B cell (primary cell): ENCODE measurements at regions of chr1 and their contacts with region 1.

Region 1: GRCh38 chr1:89524369-89525168 is at the start of gene LRRC8B:
- DNase-seq: peak; percentile 94
- ATAC-seq: peak; percentile 81
- H3K4me3 ChIP-seq: peak within 1 kb of the TSS; percentile 58 to 99 (median 88)
- H3K4me3 Mint-ChIP-seq: peak within 1 kb of the TSS; percentile 98
- H3K27ac ChIP-seq: peak within 1 kb of the TSS; percentile 97 to 98
- H3K27ac Mint-ChIP-seq: peak within 1 kb of the TSS; percentile 97
- H3K4me1 ChIP-seq: peaks cover 13 to 23% of the 10 kb centered on the region in 2 donors
- H3K4me1 Mint-ChIP-seq: peaks cover 26% of the 10 kb centered on the region
- H3K27me3 ChIP-seq: no peaks in the 10 kb centered on the region
- H3K27me3 Mint-ChIP-seq: no peaks in the 10 kb centered on the region
- CTCF ChIP-seq: peak; percentile 6
- total RNA-seq, gene LRRC8B: 9.9 and 11.7 TPM in 2 replicates

Region 2: GRCh38 chr1:89552471-89553081 is 28.0 kb after region 1 on chr1:
- CTCF ChIA-PET with region 1: interaction called, 3 read pairs
- POLR2A ChIA-PET with region 1: no interaction called
- intact Hi-C with region 1: loop called (anchors 1 kb)
- DNase-seq: peak; percentile 64
- ATAC-seq: peak; percentile 67
- H3K4me3 ChIP-seq: peak overlapping the region; percentile 8 to 66 (median 41)
- H3K4me3 Mint-ChIP-seq: peak overlapping the region; percentile 69
- H3K27ac ChIP-seq: peak overlapping the region; percentile 67 to 82
- H3K27ac Mint-ChIP-seq: peak overlapping the region; percentile 75
- H3K4me1 ChIP-seq: peaks cover 8 to 13% of the 10 kb centered on the region in 2 donors
- H3K4me1 Mint-ChIP-seq: peaks cover 37% of the 10 kb centered on the region
- H3K27me3 ChIP-seq: no peaks in the 10 kb centered on the region
- H3K27me3 Mint-ChIP-seq: no peaks in the 10 kb centered on the region
- CTCF ChIP-seq: no peak

Region 3: GRCh38 chr1:89605692-89606091 is 81.1 kb after region 1 on chr1:
- CTCF ChIA-PET with region 1: interaction called, 18 read pairs
- POLR2A ChIA-PET with region 1: no interaction called
- intact Hi-C with region 1: no loop called
- DNase-seq: no peak
- ATAC-seq: no peak
- H3K4me3 ChIP-seq: no peak overlapping the region
- H3K4me3 Mint-ChIP-seq: no peak overlapping the region
- H3K27ac ChIP-seq: no peak overlapping the region
- H3K27ac Mint-ChIP-seq: peak overlapping the region; percentile 6
- H3K4me1 ChIP-seq: peaks cover 32 to 44% of the 10 kb centered on the region in 2 donors
- H3K4me1 Mint-ChIP-seq: peaks cover 45% of the 10 kb centered on the region
- H3K27me3 ChIP-seq: no peaks in the 10 kb centered on the region
- H3K27me3 Mint-ChIP-seq: no peaks in the 10 kb centered on the region
- CTCF ChIP-seq: no peak

Region 4: GRCh38 chr1:89692601-89693521 is 168.3 kb after region 1 on chr1:
- CTCF ChIA-PET with region 1: no interaction called
- POLR2A ChIA-PET with region 1: no interaction called
- intact Hi-C with region 1: loop called (anchors 10 kb)
- DNase-seq: peak; percentile 77
- ATAC-seq: peak; percentile 63
- H3K4me3 ChIP-seq: peak overlapping the region in 1 of 5 experiments; percentile 6
- H3K4me3 Mint-ChIP-seq: peak overlapping the region; percentile 35
- H3K27ac ChIP-seq: peak overlapping the region; percentile 68 to 93
- H3K27ac Mint-ChIP-seq: peak overlapping the region; percentile 42
- H3K4me1 ChIP-seq: peaks cover 37 to 48% of the 10 kb centered on the region in 2 donors
- H3K4me1 Mint-ChIP-seq: peaks cover 54% of the 10 kb centered on the region
- H3K27me3 ChIP-seq: no peaks in the 10 kb centered on the region
- H3K27me3 Mint-ChIP-seq: no peaks in the 10 kb centered on the region
- CTCF ChIP-seq: no peak

Region 5: DNA sequence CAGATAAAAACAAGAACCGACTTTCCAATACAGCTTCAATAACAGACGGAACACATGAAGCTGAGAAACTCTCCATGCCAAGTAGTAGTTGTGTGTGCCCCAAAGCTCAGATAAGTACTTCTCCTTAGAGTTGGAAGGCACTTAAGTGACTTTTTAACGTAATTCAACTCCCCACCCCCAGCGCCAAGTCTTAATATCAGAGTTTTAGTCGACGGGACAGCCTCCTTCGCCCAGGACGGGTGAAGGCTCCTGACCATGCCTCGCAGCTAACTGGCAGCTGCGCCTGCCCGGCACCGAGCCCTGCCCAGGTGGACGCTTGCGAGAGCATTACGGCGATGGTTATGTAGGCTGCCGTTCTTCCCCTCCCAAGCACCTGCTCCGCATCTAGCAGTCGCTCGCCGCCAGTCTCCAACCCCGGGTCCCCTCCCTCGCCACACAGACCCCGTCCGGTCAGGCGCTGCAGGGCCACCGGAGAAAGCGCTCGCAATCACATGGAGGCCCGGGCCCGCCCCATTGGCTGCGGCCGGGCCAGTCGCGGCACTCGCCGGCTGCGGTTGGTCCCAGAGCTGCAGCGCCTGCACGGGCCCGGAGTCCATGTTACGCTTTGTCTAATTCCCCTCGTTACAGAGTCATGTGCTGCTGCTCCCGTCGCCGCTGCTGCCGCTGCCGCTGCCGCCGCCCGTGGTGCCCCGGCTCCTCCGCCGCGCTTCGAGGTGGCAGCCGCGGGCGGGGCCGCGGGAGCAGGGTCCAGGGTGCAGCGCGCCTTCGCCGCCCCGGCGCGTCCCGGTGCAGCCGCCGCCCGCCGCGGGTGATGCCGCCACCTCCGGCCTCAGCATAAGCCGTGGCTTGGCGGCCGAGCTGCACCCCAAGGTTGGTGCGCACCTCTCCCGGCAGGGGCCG is 296.1 kb after region 1 on chr1 and contains the start of gene LRRC8D:
- CTCF ChIA-PET with region 1: no interaction called
- POLR2A ChIA-PET with region 1: interaction called, 6 read pairs
- intact Hi-C with region 1: loop called (anchors 1 kb)
- DNase-seq: peak; percentile 85
- ATAC-seq: peak; percentile 66
- H3K4me3 ChIP-seq: peak within 1 kb of the TSS; percentile 65 to 87 (median 76)
- H3K4me3 Mint-ChIP-seq: peak within 1 kb of the TSS; percentile 90
- H3K27ac ChIP-seq: peak within 1 kb of the TSS; percentile 68 to 73
- H3K27ac Mint-ChIP-seq: peak within 1 kb of the TSS; percentile 92
- H3K4me1 ChIP-seq: peaks cover 25 to 30% of the 10 kb centered on the region in 2 donors
- H3K4me1 Mint-ChIP-seq: peaks cover 46% of the 10 kb centered on the region
- H3K27me3 ChIP-seq: no peaks in the 10 kb centered on the region
- H3K27me3 Mint-ChIP-seq: no peaks in the 10 kb centered on the region
- CTCF ChIP-seq: no peak
- total RNA-seq, gene LRRC8D: 46.8 and 47.0 TPM in 2 replicates